Activated B cell treated with CpG ODN at 0.5 μM for 24 hours (primary cell): ENCODE measurements at regions of chr5 and their contacts with region 1.

Region 1: GRCh38 chr5:132437604-132438266 is 52.8 kb downstream of the IRF1 start:
- DNase-seq: no peak
- ATAC-seq: peak; percentile 96
- H3K4me3 Mint-ChIP-seq: peak overlapping the region; percentile 48
- H3K27ac Mint-ChIP-seq: peak overlapping the region; percentile 74
- H3K4me1 Mint-ChIP-seq: peaks cover 60% of the 10 kb centered on the region
- H3K27me3 Mint-ChIP-seq: no peaks in the 10 kb centered on the region
- CTCF ChIP-seq: no peak

Region 2: DNA sequence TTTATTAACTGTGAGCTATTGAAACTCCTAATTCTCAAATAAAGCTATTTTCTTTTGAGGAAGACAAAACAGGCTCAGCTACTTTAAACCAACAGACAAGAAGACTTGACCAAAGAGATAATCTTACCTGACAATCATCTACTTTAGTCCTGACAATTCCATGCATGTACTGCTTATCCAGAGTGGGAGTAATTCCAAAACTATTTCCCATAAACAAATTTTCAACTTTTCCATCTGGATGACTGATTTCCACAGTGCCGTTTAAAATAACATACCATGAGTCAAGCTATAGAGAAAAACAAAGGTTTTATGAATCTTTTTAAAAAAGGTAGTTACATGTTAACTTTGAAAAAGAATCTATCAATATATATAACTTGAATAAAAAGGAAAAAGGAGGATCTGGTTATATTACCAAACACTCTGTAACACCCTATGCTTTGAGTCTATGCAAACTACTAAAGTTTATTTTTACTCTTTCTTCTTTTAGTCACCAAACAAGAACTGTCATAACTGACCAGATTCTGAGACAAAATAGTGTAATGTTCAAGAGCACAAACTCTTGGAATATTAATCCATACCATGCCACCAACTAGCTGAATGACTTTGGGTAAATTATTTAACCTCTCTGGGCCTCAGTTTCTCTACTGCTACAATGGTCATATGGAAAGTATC is 932.4 kb before region 1 on chr5:
- CTCF ChIA-PET with region 1: no interaction called
- POLR2A ChIA-PET with region 1: no interaction called
- intact Hi-C with region 1: no loop called
- DNase-seq: no peak
- ATAC-seq: no peak
- H3K4me3 Mint-ChIP-seq: peak overlapping the region; percentile 72
- H3K27ac Mint-ChIP-seq: peak overlapping the region; percentile 78
- H3K4me1 Mint-ChIP-seq: peaks cover 28% of the 10 kb centered on the region
- H3K27me3 Mint-ChIP-seq: no peaks in the 10 kb centered on the region
- CTCF ChIP-seq: no peak

Region 3: DNA sequence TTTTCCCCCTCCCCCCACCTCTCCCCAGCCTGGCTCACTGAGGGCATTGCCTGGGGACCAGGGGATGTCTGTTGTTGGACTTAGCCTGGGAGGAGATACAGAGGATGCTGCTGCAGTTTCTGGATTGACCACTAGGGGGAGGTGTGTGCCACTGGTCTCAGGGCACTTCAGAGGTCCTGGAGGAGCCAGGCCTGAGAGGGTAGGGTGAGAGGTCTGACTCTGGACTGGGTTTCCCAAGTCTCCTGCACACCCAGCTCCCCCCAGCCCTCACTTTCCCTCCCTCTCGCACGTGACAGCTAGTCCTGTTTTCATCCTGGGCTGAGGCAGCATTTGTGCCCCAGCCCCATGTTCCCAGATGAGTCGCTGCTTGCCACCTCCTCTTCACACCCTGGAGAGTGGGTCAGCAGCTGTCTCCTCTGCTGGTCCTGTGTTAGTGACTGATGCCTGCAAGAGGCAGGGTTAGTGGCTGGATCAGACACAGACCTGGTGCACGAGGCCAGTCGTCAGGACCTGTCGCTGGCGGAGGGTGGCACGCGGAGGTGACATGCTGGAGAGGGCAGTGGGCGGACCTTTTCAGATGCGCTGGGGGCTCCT is 372.9 kb before region 1 on chr5:
- CTCF ChIA-PET with region 1: no interaction called
- POLR2A ChIA-PET with region 1: no interaction called
- intact Hi-C with region 1: no loop called
- DNase-seq: peak; percentile 64
- ATAC-seq: peak; percentile 86
- H3K4me3 Mint-ChIP-seq: no peak overlapping the region
- H3K27ac Mint-ChIP-seq: no peak overlapping the region
- H3K4me1 Mint-ChIP-seq: peaks cover 8% of the 10 kb centered on the region
- H3K27me3 Mint-ChIP-seq: no peaks in the 10 kb centered on the region
- CTCF ChIP-seq: peak; percentile 35

Region 4: DNA sequence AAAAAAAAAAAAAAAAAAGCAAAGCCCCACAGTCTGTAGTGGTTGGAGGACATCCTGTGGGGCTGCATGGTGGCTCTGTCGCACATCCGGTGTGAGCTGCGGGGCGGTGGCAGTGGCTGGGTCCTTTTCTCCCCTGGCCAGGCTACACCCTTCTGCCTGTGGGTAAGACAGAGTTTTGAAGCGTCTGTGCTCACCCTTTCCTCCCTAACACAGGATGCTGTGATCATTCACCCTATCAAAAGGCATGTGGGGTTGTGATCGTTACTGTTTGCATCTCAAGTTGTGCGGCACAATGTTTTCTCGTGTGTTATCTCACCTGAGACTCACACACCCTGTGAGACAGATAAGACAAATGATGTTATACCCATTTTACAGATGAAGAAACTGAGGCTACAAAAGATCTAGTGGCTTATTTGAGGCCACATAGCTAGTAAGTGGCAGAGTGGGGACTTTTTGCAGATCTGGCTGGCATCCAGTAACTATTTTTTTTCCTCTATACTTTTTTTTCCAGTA is 35.3 kb after region 1 on chr5:
- CTCF ChIA-PET with region 1: no interaction called
- POLR2A ChIA-PET with region 1: interaction called, 159 read pairs
- intact Hi-C with region 1: loop called (anchors 1 kb)
- DNase-seq: peak; percentile 50
- ATAC-seq: peak; percentile 87
- H3K4me3 Mint-ChIP-seq: peak overlapping the region; percentile 50
- H3K27ac Mint-ChIP-seq: peak overlapping the region; percentile 91
- H3K4me1 Mint-ChIP-seq: peaks cover 78% of the 10 kb centered on the region
- H3K27me3 Mint-ChIP-seq: no peaks in the 10 kb centered on the region
- CTCF ChIP-seq: no peak